ENCODE measurements at regions of chr16 and their contacts with region 1.

Region 1: DNA sequence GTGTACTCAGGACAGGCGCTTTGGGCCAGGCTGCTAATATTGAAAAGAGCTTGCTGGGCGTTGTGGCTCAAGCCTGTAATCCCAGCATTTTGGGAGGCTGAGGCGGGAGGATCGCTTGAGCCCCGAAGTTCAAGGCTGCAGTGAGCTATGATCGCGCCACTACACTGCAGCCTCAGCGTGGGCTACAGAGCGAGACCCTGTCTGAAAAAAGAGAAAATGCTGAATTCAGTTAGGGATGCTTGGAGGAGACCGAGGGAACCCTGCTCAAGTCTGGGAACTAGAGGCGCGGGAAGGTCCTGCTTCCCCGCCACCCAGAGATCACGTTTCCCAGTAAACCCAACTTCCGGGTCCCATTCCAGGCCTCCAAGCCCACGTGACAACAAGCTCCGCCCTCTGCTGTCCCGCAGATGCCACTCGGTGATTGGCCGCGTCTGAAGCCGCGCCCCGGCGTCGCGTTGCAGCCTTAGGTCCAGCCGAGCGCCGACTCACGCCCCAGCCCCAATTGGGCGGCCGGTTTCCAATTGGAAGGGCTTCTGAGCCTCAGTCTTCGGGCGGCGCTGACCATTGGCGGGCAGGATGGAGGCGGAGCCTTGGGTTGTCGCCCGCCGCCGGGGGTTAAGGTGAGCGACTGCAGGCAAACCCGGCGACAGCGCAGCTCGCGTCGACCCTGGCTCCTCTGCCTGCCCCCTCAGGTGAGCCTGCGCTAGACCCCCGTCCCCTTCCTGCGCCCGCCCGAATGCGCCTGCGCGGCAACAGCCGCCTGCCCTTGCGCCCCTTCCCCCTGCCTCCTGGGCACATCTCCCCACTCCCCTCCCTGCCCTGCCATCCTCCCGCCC is at the start of gene PHKG2:
- DNase-seq: peak; percentile 99
- ATAC-seq: peak; percentile 97
- H3K4me3 Mint-ChIP-seq: peak within 1 kb of the TSS; percentile 94
- H3K27ac Mint-ChIP-seq: peak within 1 kb of the TSS; percentile 96
- H3K4me1 Mint-ChIP-seq: peaks cover 7% of the 10 kb centered on the region
- H3K27me3 Mint-ChIP-seq: no peaks in the 10 kb centered on the region
- CTCF ChIP-seq: no peak
- total RNA-seq, gene PHKG2: 40.8 to 50.5 TPM (median 45.0 TPM) in 3 replicates

Region 2: GRCh38 chr16:30728899-30729672 is 18.9 kb before region 1 on chr16:
- CTCF ChIA-PET with region 1: no interaction called
- POLR2A ChIA-PET with region 1: no interaction called
- DNase-seq: peak; percentile 23
- ATAC-seq: 0 out of 2 replicates have a peak, but pooled peaks have one; percentile 20
- H3K4me3 Mint-ChIP-seq: no peak overlapping the region
- H3K27ac Mint-ChIP-seq: no peak overlapping the region
- H3K4me1 Mint-ChIP-seq: peaks cover 12% of the 10 kb centered on the region
- H3K27me3 Mint-ChIP-seq: no peaks in the 10 kb centered on the region
- CTCF ChIP-seq: no peak

Region 3: GRCh38 chr16:30775392-30776188 is 27.6 kb after region 1 on chr16:
- CTCF ChIA-PET with region 1: no interaction called
- POLR2A ChIA-PET with region 1: interaction called, 12 read pairs
- DNase-seq: peak; percentile 88
- ATAC-seq: peak; percentile 80
- H3K4me3 Mint-ChIP-seq: peak overlapping the region; percentile 91
- H3K27ac Mint-ChIP-seq: peak overlapping the region; percentile 98
- H3K4me1 Mint-ChIP-seq: peaks cover 25% of the 10 kb centered on the region
- H3K27me3 Mint-ChIP-seq: peaks cover 3% of the 10 kb centered on the region
- CTCF ChIP-seq: no peak

Region 4: DNA sequence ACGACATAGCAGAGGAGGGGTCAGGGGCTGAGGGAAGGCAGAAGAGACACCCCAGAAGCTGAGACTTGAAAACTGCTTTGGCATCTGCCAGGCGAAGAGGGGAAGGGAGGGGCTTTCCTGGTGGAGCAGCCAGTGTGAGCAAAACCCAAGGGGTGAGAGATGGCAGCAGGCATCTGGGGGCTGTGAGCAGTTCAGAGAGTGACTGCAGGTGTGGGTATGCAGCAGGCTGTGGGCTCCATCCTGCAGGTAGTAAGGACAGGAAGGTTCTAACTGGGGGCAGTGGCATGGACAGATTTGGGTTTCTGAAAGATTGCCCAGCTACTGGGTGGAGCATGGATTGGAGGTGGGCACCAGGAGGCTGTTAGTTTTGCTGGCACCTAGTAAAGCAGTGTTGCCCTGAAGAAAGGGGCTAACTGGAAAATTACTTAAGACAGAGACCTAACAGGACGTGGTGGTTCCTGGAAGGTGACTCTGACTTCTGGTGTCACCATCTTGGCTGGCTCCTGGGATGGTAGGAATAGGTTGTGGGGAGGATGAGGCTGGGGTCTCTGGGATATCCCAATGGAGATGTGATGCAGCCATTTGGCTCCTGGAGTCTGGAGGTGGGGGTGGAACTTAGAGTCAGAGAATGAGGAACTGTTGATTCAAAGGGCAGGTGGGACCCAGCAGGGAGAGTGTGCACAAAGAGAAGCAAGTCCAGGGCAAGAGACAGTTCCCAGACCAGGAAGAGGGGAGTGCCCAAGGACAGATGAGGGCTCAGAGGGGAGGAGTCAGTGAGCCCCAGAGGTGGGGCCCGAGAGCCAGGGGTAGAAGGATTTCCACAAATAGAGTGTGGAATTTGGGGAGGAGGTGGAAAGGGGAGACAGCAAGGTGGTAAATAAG is 134.7 kb after region 1 on chr16:
- CTCF ChIA-PET with region 1: no interaction called
- POLR2A ChIA-PET with region 1: no interaction called
- DNase-seq: no peak
- ATAC-seq: peak; percentile 67
- H3K4me3 Mint-ChIP-seq: no peak overlapping the region
- H3K27ac Mint-ChIP-seq: peak overlapping the region; percentile 55; the same call in 1 of the 2 replicates
- H3K4me1 Mint-ChIP-seq: peaks cover 8% of the 10 kb centered on the region
- H3K27me3 Mint-ChIP-seq: no peaks in the 10 kb centered on the region
- CTCF ChIP-seq: no peak